ENCODE measurements at regions of chr3 and their contacts with region 1.

Region 1: GRCh38 chr3:122101646-122102045 is 46.5 kb downstream of the CD86 start:
- DNase-seq: peak; percentile 76
- H3K4me3 Mint-ChIP-seq: no peak overlapping the region
- H3K27ac Mint-ChIP-seq: no peak overlapping the region
- H3K4me1 Mint-ChIP-seq: no peaks in the 10 kb centered on the region
- H3K27me3 Mint-ChIP-seq: no peaks in the 10 kb centered on the region
- CTCF ChIP-seq: peak; percentile 74

Region 2: DNA sequence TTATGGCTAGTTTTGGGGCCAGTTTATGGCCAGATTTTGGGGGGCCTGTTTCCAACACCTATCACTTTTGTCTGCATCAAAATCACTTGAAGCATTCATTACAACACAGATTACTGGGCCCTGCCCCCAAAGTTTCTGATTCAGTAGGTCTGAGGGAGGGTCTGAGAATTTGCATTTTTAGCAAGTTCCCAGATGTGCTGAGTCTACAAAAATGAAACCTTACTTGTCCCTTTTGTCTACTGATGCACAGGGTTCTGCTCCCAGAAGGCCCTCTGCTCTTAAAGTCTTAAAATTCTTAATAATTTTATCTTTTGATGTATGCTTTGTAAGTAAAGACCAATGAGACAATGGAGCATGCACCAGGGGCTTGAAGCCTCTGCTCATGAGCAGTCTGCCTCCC is 701.8 kb before region 1 on chr3:
- CTCF ChIA-PET with region 1: no interaction called
- POLR2A ChIA-PET with region 1: no interaction called
- intact Hi-C with region 1: no loop called
- DNase-seq: no peak
- H3K4me3 Mint-ChIP-seq: no peak overlapping the region
- H3K27ac Mint-ChIP-seq: no peak overlapping the region
- H3K4me1 Mint-ChIP-seq: no peaks in the 10 kb centered on the region
- H3K27me3 Mint-ChIP-seq: no peaks in the 10 kb centered on the region
- CTCF ChIP-seq: no peak

Region 3: GRCh38 chr3:121855555-121855954 is 246.1 kb before region 1 on chr3:
- CTCF ChIA-PET with region 1: no interaction called
- POLR2A ChIA-PET with region 1: no interaction called
- intact Hi-C with region 1: loop called (anchors 10 kb)
- DNase-seq: peak; percentile 37
- H3K4me3 Mint-ChIP-seq: no peak overlapping the region
- H3K27ac Mint-ChIP-seq: no peak overlapping the region
- H3K4me1 Mint-ChIP-seq: peaks cover 8% of the 10 kb centered on the region
- H3K27me3 Mint-ChIP-seq: no peaks in the 10 kb centered on the region
- CTCF ChIP-seq: peak; percentile 16

Region 4: DNA sequence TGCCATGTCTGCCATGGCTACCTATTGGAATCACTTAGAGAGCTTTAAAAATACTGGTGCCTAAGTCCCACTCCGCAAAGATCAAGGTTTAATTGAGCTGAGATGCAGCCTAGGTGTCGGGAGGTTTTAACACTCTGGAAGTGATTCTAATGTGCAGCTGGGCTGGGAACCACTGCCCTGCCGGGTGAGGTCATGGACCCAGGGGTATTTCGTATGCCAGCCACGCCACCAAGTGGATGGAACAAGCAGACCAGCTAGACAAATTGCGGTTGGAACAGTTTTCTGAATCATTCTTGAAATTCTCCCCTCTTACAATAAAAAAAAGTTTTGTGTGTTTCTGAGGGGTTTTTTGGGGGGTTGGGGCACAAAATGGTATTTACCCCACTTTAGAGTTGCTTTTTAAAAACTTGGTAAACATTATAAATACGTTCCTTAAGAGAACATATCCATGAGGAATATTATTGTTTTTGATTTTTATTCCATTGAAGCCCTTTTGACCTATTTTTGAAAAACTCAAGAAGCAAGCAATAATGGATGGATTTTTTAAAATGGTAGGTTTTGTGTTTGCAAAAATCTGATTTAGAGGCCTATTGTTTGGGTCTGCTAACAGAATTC is 157.2 kb after region 1 on chr3:
- CTCF ChIA-PET with region 1: interaction called, 36 read pairs
- POLR2A ChIA-PET with region 1: interaction called, 3 read pairs
- intact Hi-C with region 1: loop called (anchors 1 kb)
- DNase-seq: peak; percentile 74
- H3K4me3 Mint-ChIP-seq: no peak overlapping the region
- H3K27ac Mint-ChIP-seq: no peak overlapping the region
- H3K4me1 Mint-ChIP-seq: no peaks in the 10 kb centered on the region
- H3K27me3 Mint-ChIP-seq: no peaks in the 10 kb centered on the region
- CTCF ChIP-seq: peak; percentile 72

Region 5: DNA sequence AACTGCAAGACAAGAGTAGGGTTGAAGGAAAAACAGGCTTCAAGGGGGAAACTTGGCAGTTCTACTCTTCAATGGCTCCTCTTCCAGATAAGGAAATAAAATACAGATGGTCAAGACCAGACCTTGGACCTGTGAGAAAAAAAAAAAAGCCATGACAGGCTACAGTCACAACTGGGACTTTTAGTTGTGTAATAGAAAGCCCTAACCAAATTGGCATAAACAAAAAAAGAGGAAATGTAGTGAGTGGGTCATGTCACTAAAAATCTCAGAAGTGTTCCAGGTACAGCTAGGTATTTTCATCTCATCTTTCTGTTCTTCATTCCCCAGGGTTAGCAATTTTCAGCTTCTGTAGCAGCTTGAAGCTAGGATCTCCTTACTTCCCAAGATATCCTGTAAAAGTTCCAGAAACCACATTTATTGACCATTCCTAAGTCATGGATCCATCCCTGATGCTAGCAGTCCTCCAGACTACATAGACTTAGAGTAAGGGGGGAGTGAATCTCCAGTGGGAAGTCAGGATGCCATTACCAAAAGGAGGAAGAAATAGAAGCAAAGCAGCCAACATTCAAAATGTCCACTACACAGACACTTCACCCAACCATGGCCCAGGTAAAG is 162.4 kb after region 1 on chr3:
- CTCF ChIA-PET with region 1: interaction called, 36 read pairs
- POLR2A ChIA-PET with region 1: no interaction called
- intact Hi-C with region 1: no loop called
- DNase-seq: no peak
- H3K4me3 Mint-ChIP-seq: no peak overlapping the region
- H3K27ac Mint-ChIP-seq: no peak overlapping the region
- H3K4me1 Mint-ChIP-seq: no peaks in the 10 kb centered on the region
- H3K27me3 Mint-ChIP-seq: no peaks in the 10 kb centered on the region
- CTCF ChIP-seq: no peak

Region 6: DNA sequence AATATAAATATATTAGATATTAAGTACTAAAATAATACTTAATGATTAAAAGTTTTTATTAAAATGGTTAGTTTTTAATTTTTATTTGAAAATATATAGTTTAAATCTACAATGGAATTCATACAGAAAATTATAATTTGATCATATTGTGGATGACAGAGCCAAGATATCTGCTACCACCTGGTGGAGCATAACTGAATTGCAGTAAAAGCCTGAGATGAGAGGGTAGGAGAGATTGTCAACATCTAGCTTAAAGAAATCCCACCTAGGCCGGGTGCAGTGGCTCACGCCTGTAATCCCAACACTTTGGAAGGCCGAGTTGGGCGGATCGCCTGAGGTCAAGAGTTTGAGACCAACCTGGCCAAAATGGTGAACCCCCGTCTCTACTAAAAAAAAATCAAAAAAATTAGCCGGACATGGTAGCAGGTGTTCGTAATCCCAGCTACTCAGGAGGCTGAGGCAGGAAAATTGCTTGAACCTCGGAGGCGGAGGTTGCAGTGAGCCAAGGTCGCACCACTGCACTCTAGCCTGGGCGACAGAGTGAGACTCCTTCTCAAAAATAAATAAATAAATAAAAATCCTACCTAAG is 198.3 kb after region 1 on chr3:
- CTCF ChIA-PET with region 1: interaction called, 3 read pairs
- POLR2A ChIA-PET with region 1: interaction called, 3 read pairs
- intact Hi-C with region 1: loop called (anchors 2 kb)
- DNase-seq: peak; percentile 55
- H3K4me3 Mint-ChIP-seq: no peak overlapping the region
- H3K27ac Mint-ChIP-seq: no peak overlapping the region
- H3K4me1 Mint-ChIP-seq: no peaks in the 10 kb centered on the region
- H3K27me3 Mint-ChIP-seq: no peaks in the 10 kb centered on the region
- CTCF ChIP-seq: peak; percentile 33

Region 7: GRCh38 chr3:122356415-122356814 is 254.8 kb after region 1 on chr3:
- CTCF ChIA-PET with region 1: interaction called, 7 read pairs
- POLR2A ChIA-PET with region 1: no interaction called
- intact Hi-C with region 1: loop called (anchors 1 kb)
- DNase-seq: peak; percentile 81
- H3K4me3 Mint-ChIP-seq: no peak overlapping the region
- H3K27ac Mint-ChIP-seq: no peak overlapping the region
- H3K4me1 Mint-ChIP-seq: peaks cover 26% of the 10 kb centered on the region
- H3K27me3 Mint-ChIP-seq: no peaks in the 10 kb centered on the region
- CTCF ChIP-seq: peak; percentile 50

Measured in MCF 10A (cell line).